Sigmoid colon (tissue), 7 donors: ENCODE measurements at regions of chr13 and their contacts with region 1.

Region 1: GRCh38 chr13:49436890-49437289 is 7.0 kb downstream of the CAB39L start:
- DNase-seq: peak; percentile 77
- H3K4me3 ChIP-seq: no peak overlapping the region
- H3K27ac ChIP-seq: peak overlapping the region; percentile 37 to 44 (median 42)
- H3K4me1 ChIP-seq: peaks cover 0 to 15% (median 6%) of the 10 kb centered on the region in 4 donors
- H3K27me3 ChIP-seq: no peaks in the 10 kb centered on the region
- CTCF ChIP-seq: peak in 3 of 4 experiments; percentile 19 to 29 (median 21)
- EP300 ChIP-seq: no peak
- POLR2A ChIP-seq: no peak

Region 2: DNA sequence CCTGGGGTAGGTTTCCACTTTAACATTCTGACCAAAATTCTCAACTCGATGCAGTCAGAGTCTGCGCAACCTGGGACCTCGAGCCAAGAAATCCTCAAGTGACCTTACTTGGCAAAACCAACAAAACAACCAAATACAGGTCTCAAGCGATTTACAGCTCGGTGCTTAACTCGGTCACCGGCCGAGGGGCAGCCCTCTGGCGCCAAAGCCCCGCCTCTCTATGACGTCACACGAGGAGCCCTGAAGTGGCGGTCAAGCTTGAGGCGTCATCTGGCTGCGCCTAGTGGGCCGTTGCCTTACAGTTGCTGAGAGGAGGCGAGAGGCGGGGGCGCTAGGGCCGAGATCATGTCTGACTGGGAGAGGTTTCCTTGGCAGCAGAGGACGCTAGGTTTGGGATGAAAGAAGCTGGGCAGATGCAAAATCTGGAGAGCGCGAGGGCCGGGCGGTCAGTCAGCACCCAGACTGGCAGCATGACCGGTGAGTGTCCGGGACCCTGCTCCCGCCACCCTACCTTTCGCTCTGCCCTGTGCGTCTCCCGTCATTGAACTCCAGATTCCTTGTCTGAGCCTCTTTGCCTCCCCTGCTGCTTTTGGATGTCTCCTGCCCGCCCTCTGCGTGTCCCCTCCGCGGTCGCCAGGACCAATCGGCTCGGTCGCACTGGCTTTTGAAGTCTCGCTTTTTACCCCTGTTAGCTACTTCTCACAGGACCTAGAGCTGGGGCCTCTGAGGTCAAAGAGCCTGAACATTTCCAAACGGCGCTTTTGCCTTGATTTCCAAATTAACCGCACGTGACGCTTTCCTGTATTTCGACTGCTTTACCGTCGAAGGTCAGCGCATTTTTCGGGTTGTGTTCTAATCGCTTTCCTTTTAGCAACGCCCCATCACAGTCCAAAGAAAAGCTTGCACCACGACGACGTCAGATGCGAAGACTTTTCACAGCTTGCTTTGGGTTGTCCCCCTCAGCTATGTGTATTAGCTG is 189.0 kb before region 1 on chr13 and contains the start of gene CDADC1:
- intact Hi-C with region 1: loop called (anchors 5 kb)
- DNase-seq: peak; percentile 99
- H3K4me3 ChIP-seq: peak within 1 kb of the TSS; percentile 76 to 85 (median 81)
- H3K27ac ChIP-seq: peak within 1 kb of the TSS; percentile 88 to 93 (median 90)
- H3K4me1 ChIP-seq: peaks cover 2 to 41% (median 23%) of the 10 kb centered on the region in 4 donors
- H3K27me3 ChIP-seq: no peaks in the 10 kb centered on the region
- CTCF ChIP-seq: no peak
- EP300 ChIP-seq: peak in 2 of 4 donors; percentile 42 to 65
- POLR2A ChIP-seq: peak; percentile 88 to 89
- total RNA-seq, gene CDADC1: 6.5 to 12.2 (median 8.1) TPM

Region 3: DNA sequence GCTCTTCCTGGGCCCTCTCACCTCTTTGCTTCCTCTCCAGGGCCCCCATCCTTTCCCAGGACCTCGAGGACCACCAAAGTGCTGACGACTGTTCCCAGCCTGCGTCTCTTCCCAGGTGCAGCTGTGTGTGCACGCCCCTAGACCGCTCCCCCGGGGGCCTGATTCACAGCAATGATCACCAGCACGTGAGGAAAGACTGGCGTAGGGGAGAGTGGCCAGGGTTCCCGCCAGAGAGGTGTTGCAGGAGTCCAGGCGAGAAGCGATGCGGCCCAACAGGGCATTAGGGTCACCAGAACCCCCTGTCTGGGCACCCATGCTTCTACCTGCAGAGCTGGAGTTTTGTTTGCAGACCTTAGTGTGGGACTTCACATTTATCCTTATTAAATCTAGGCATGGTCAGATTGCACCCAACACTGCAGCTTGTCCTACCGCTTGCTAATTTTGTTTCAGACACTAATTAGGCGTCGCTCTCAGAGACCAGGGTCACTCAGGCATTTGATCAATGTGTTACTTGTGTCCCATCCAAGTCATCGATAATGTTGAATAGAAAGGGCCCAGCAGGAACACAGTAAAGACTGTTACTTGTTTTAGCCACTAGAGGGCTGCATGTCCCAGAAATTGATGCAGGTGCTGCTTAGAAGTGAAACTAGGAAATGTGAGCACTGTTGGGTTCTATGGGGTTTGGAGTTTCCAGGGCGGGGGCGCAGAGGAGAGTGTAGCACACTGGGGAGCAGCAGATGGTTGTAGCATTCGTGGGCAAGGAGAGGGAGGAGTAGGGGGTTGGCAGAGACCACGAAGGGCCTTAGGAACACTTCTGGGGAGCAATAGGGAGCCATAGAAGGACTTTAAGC is 135.9 kb before region 1 on chr13:
- intact Hi-C with region 1: loop called (anchors 1 kb)
- DNase-seq: peak; percentile 81
- H3K4me3 ChIP-seq: peak overlapping the region in 3 of 4 donors; percentile 9 to 34 (median 22)
- H3K27ac ChIP-seq: peak overlapping the region; percentile 43 to 89 (median 76)
- H3K4me1 ChIP-seq: peaks cover 0 to 42% (median 38%) of the 10 kb centered on the region in 4 donors
- H3K27me3 ChIP-seq: no peaks in the 10 kb centered on the region
- CTCF ChIP-seq: peak; percentile 82 to 95 (median 90)
- EP300 ChIP-seq: no peak
- POLR2A ChIP-seq: no peak

Region 4: GRCh38 chr13:49314344-49314882 is 122.5 kb before region 1 on chr13:
- intact Hi-C with region 1: no loop called
- DNase-seq: no peak
- H3K4me3 ChIP-seq: no peak overlapping the region
- H3K27ac ChIP-seq: peak overlapping the region; percentile 73 to 85 (median 79)
- H3K4me1 ChIP-seq: peaks cover 0 to 46% (median 29%) of the 10 kb centered on the region in 4 donors
- H3K27me3 ChIP-seq: no peaks in the 10 kb centered on the region
- CTCF ChIP-seq: no peak
- EP300 ChIP-seq: no peak
- POLR2A ChIP-seq: no peak